MCF 10A (cell line): ENCODE measurements at regions of chr6 and their contacts with region 1.

Region 1: DNA sequence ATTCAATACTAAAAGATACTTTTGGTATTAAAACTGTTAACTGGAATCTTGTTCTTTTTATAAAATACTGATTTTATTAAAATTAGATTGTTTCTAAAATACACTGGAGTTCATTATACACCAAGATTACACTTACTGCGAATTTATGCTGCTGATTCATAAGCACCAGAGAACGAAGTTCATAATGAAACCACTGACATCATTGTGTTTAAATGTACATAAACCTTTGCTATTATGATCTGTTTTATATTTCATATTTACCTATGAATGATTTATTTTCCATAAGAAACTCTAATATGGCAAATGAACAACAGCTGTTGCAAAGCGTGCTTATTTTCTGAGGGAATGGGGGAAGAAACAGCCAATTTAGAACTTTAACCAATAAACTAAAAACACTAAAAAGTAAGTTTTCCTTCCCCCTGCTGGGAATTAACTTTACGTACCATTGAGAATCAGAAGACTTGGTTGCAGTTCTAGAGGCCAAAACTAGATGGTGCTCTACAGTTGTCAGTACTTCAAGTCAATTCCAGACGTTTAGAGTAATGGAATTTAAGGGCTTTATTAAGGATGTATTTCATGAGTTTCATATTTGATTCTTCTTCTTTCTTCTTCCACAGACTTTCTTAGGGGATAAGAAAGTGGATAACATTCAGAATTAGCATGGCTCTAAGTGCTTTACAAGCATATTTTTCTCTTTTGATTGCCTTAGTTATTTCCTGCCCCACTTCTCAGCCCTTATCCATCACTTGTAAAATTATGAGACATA is 30.8 kb upstream of the COL19A1 start:
- DNase-seq: peak; percentile 60
- H3K4me3 Mint-ChIP-seq: no peak overlapping the region
- H3K27ac Mint-ChIP-seq: no peak overlapping the region
- H3K4me1 Mint-ChIP-seq: no peaks in the 10 kb centered on the region
- H3K27me3 Mint-ChIP-seq: peaks cover 94% of the 10 kb centered on the region
- CTCF ChIP-seq: peak; percentile 64

Region 2: DNA sequence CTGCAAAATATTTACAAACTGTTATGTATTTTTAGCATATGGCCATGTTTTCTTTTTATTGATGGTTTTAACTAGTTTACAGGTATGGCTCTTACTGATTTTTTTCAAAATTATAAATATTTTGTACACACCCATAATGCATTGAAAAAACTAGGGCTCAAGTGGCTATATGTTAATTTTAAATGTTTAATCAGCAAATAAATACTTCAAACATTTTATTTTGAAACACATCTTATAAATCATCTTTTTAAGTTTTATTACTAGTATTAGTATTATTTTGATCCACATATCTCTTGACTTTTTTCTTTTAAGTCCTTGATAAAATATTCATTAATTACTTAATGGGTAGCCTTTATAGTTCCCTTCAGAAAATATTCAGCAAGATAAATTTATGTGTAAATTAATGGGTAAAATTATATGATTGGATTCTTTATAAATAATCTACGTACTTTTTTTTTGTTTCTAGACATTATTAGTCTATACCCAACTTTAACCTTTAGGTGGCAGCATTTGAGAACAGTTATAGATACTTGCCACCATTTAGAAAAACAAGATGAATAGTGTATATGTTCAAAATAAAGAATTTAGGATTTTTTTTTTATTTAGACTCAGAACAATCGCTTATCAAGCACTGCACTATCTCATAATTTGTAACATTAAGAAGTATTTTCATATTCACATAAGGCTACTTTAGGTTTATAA is 958.7 kb before region 1 on chr6:
- CTCF ChIA-PET with region 1: no interaction called
- POLR2A ChIA-PET with region 1: no interaction called
- intact Hi-C with region 1: loop called (anchors 5 kb)
- DNase-seq: peak; percentile 22
- H3K4me3 Mint-ChIP-seq: no peak overlapping the region
- H3K27ac Mint-ChIP-seq: no peak overlapping the region
- H3K4me1 Mint-ChIP-seq: no peaks in the 10 kb centered on the region
- H3K27me3 Mint-ChIP-seq: peaks cover 69% of the 10 kb centered on the region
- CTCF ChIP-seq: peak; percentile 36

Region 3: DNA sequence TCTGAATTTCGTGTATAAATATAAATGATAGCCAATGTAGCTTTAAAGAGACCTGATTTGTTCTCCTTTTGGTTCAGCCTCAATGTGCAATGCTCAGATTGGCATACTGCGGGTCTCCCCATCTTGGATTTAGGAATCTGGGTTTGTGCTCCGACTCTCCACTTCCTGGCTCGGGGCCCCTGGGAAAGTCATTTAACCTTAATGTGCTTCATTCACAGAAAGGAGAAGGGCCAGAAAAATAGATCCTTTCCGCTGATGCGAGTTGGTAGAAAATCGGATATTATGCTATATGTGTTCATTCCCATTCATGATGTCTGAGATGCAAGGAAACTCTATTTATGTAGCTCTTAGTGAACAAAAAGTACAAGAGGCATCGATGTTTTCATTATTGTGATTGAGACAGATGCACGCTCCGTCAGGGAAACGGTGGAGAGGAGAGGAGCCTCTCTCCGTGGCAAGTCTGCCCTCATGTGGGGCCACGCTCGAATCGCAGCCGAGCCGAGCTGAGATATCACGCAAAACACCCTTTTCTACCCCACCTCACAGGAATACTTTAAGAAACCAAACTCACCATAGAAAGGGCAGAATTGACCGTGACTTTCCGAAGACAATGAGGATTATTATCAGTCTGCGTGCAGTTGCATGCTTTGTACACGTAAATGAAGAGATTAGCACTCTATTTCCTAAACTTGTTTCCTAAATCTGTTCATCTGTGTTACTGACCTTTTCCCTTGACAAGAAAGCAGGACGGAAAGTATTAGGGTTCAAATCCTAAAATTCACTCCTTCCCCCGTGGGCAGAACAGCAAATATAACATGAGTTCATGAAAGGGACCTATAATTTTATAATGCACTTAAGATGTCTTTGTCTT is 330.7 kb after region 1 on chr6:
- CTCF ChIA-PET with region 1: interaction called, 3 read pairs
- POLR2A ChIA-PET with region 1: no interaction called
- intact Hi-C with region 1: loop called (anchors 1 kb)
- DNase-seq: peak; percentile 38
- H3K4me3 Mint-ChIP-seq: no peak overlapping the region
- H3K27ac Mint-ChIP-seq: no peak overlapping the region
- H3K4me1 Mint-ChIP-seq: no peaks in the 10 kb centered on the region
- H3K27me3 Mint-ChIP-seq: peaks cover 100% of the 10 kb centered on the region
- CTCF ChIP-seq: peak; percentile 38